ENCODE measurements at regions of chr17 and their contacts with region 1.

Region 1: GRCh38 chr17:68172461-68172954 is 75.3 kb upstream of the AMZ2 start:
- H3K4me3 ChIP-seq: no peak overlapping the region
- H3K27ac ChIP-seq: no peak overlapping the region
- H3K4me1 ChIP-seq: no peaks in the 10 kb centered on the region
- CTCF ChIP-seq: peak; percentile 89

Region 2: DNA sequence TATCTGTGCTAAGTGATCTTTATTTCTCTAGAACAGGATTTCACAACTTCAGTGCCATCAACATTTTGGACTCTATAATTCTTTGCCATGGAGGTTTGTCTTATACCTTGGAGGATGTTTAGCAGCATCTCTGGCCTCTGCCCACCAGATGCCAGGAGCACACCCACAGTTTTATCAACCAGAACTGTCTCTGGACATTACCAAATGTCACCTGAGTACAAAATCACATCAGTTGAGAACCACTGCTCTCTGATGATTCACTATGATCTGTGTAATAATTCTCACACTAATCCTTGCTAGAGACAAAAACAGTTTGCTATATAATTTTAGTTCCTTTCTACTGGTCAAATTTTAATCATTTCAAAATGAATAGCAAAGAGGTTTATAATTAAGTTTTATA is 27.4 kb before region 1 on chr17:
- CTCF ChIA-PET with region 1: no interaction called
- POLR2A ChIA-PET with region 1: no interaction called
- H3K4me3 ChIP-seq: no peak overlapping the region
- H3K27ac ChIP-seq: no peak overlapping the region
- H3K4me1 ChIP-seq: no peaks in the 10 kb centered on the region
- CTCF ChIP-seq: no peak

Region 3: GRCh38 chr17:68161644-68162428 is 10.7 kb before region 1 on chr17:
- CTCF ChIA-PET with region 1: interaction called, 12 read pairs
- POLR2A ChIA-PET with region 1: no interaction called
- H3K4me3 ChIP-seq: no peak overlapping the region
- H3K27ac ChIP-seq: no peak overlapping the region
- H3K4me1 ChIP-seq: no peaks in the 10 kb centered on the region
- CTCF ChIP-seq: no peak

Region 4: DNA sequence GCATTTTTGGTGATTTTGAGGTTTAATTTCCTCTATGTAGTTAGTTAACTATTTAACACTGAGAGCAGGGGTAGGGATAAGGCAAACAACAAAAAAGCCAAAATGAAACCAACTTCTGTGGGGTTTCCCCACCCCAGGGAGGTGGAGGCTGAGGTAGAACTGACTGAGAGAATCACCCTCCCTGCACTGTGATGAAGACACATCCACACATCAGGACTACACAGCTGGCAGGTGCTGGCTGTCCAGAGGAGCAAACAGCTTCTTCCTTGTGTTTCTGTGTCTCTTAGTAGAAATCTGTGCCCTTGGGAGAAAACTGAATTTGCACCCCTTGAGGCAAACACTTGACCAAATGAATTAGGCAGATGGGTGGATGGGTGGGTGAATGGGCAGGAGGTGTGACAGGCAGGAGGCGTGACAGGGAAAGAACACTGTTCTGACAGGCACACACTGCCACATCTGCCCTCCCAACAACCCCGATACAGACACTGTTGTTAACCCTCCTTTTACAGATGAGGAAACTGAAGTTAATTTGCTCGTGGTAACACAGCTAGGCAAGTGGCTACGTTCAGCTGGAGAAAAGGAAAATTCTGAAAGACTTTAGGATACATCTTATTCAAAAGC is 12.4 kb after region 1 on chr17:
- CTCF ChIA-PET with region 1: interaction called, 22 read pairs
- POLR2A ChIA-PET with region 1: no interaction called
- H3K4me3 ChIP-seq: no peak overlapping the region
- H3K27ac ChIP-seq: no peak overlapping the region
- H3K4me1 ChIP-seq: no peaks in the 10 kb centered on the region
- CTCF ChIP-seq: no peak

Region 5: GRCh38 chr17:68196944-68197595 is 24.6 kb after region 1 on chr17:
- CTCF ChIA-PET with region 1: interaction called, 101 read pairs
- POLR2A ChIA-PET with region 1: interaction called, 4 read pairs
- H3K4me3 ChIP-seq: peak overlapping the region; percentile 47
- H3K27ac ChIP-seq: no peak overlapping the region
- H3K4me1 ChIP-seq: no peaks in the 10 kb centered on the region
- CTCF ChIP-seq: no peak

Region 6: DNA sequence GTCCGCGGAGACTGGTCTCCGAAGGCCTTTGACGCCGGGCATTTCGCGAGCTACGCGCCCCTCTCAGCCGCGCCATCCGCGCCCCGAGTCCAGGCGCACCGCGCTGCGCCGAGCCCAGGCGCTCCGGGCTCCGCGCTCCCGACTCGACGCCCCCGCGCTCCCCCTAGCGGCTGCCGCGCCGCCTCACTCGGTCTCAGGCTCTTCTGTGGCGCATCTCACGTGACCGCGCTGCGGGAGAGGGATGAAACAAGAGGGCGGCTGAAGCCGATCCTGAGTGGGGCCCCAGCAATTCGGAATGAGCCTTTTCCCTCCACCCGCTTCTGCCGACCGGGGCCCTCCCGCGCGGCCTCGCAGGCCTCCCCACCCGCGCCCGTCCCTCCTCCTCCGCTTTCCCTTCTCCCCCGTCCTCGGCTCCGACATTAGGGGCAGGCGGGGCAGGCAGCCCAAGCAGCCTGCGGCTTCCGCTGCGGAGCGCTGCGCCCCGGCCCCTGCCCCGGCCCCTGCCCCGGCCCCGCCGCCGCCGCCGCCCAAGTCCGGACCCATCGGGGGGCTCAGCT is 32.8 kb after region 1 on chr17:
- CTCF ChIA-PET with region 1: interaction called, 101 read pairs
- POLR2A ChIA-PET with region 1: interaction called, 4 read pairs
- H3K4me3 ChIP-seq: peak overlapping the region; percentile 90
- H3K27ac ChIP-seq: peak overlapping the region; percentile 79; the same call in 1 of the 2 replicates
- H3K4me1 ChIP-seq: peaks cover 5% of the 10 kb centered on the region; the same call in 1 of the 2 replicates
- CTCF ChIP-seq: peak; percentile 79

Region 7: GRCh38 chr17:68377862-68378770 is 205.6 kb after region 1 on chr17:
- CTCF ChIA-PET with region 1: no interaction called
- POLR2A ChIA-PET with region 1: no interaction called
- H3K4me3 ChIP-seq: no peak overlapping the region
- H3K27ac ChIP-seq: peak overlapping the region; percentile 57; the same call in 1 of the 2 replicates
- H3K4me1 ChIP-seq: peaks cover 29% of the 10 kb centered on the region
- CTCF ChIP-seq: no peak

Region 8: DNA sequence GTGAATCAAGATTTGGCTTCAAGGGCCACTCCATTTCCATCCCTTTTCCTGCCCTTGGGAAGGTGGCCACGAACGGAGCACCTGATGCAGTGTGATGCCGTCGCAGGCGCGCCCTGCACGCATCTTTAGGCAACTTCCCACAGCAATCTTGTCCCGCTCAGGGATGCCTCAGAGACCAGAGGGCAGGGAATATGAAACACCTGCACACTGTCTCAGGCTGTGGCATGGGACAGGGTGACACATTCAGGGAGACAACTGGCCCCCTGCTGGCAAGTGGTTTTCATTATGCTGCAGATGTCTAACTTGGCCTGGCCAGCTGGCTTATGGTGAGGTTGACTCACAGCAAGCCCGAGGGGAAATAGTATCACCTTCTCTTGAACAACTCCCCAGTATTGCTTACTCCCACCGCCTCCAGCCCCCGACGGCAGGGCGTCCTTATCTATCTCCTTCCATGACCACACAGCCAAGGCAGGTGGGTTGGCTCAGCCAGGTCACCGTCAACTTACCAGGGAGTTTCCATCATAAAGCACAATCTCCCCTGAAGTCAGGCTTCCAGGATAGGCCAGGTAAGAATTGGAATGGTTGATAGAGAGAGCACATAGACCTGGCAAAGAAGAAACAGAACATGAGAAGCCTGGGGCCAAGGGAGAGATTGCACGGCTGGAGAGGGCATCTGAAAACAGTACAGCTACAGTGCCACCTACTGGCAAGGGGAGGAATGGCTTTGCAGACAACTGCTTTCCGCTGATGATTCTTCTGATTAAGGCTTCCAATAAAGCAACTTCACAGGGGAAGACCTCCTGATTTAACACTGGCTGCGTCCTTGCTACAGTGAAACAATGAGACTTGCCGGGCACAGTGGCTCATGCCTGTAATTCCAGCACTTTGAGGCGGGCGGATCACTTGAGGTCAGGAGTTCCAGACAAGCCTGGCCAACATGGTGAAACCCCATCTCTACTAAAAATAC is 263.7 kb after region 1 on chr17:
- CTCF ChIA-PET with region 1: interaction called, 27 read pairs
- POLR2A ChIA-PET with region 1: no interaction called
- H3K4me3 ChIP-seq: no peak overlapping the region
- H3K27ac ChIP-seq: no peak overlapping the region
- H3K4me1 ChIP-seq: peaks cover 6% of the 10 kb centered on the region
- CTCF ChIP-seq: peak; percentile 79